ENCODE measurements at regions of chr5 and their contacts with region 1.

Region 1: DNA sequence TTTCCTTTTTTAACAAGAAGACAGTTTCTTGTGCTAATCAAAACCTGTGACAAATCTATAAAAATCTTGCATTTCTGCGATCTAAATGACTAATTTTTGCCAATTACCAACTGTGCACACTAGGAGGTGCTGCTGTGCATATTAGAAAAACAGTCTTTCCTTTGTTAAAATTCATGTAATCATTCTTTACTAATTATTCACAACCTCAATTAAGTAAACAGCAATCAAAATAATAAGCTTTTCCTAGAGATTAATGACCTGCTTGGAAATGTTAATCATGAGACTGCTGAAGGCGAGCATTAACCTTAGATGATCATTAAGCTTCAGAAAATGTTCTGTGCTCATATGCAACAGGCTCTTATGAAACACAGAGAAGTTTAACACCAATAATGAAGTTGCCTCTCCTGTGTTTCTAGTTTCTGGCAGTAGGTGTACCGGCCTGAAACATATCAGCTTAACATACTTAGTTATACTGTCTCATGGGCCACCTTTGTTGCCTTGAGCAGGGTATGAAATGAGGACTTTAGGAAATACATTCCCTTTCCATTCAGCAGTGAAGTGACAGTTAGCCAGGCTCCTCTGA is 17.7 kb downstream of the RFESD start:
- DNase-seq: peak; percentile 26
- H3K27ac ChIP-seq: no peak overlapping the region
- CTCF ChIP-seq: peak; percentile 89

Region 2: GRCh38 chr5:95652849-95653248 is 11.4 kb before region 1 on chr5:
- CTCF ChIA-PET with region 1: interaction called, 10 read pairs
- POLR2A ChIA-PET with region 1: no interaction called
- DNase-seq: no peak
- H3K27ac ChIP-seq: no peak overlapping the region
- CTCF ChIP-seq: no peak

Region 3: DNA sequence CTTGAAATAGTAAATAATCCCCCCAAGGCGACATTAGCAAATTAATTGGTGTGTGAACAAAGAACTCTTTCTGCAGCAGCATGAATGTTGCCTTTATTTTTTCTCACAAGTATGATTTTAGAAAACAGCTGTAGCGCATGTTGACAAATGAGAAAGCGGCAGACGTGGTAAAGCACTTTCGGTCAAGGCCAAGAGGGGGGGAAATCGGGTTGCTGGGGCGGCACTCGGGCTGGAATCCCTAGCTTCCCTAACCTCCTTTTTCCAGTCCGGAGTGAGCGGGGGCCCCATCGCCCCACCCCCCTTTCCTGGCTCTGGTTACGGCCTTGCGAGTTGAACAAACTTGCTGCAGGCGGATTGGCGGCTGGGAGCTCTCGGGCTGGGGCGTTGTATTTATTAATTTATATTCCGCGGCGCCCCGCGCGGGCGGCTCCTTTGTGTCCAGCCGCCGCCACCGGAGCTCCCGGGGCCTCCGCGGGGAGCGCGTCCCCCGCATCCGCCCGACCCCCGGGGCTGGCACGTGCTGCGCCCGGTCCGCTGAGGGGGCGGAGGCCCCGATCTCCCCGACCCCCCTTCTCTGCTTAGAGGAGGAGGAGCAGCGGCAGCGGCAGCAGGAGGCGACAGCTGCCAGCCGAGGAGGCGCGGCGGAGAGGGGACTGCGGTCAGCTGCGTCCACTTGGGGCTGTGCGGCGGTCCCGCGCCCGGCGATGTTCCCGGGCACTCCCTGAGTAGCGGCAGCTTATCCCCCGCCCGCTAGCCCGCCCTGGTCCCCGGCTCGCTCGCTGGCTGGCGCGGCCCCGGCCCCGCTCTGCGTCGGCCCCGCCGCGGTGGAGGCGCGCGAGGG is 66.7 kb after region 1 on chr5 and contains the start of gene RHOBTB3:
- CTCF ChIA-PET with region 1: interaction called, 13 read pairs
- POLR2A ChIA-PET with region 1: no interaction called
- DNase-seq: peak; percentile 80
- H3K27ac ChIP-seq: peak within 1 kb of the TSS; percentile 86
- CTCF ChIP-seq: no peak